ENCODE measurements at regions of chrX and their contacts with region 1.

Region 1: GRCh38 chrX:125132285-125132684 is 187.4 kb upstream of the TEX13C start:
- DNase-seq: no peak
- H3K4me3 Mint-ChIP-seq: no peak overlapping the region
- H3K27ac Mint-ChIP-seq: no peak overlapping the region
- H3K4me1 Mint-ChIP-seq: no peaks in the 10 kb centered on the region
- H3K27me3 Mint-ChIP-seq: no peaks in the 10 kb centered on the region

Region 2: GRCh38 chrX:124388562-124388961 is 743.7 kb before region 1 on chrX:
- CTCF ChIA-PET with region 1: interaction called, 6 read pairs
- POLR2A ChIA-PET with region 1: no interaction called
- intact Hi-C with region 1: loop called (anchors 5 kb)
- DNase-seq: peak; percentile 61
- H3K4me3 Mint-ChIP-seq: no peak overlapping the region
- H3K27ac Mint-ChIP-seq: no peak overlapping the region
- H3K4me1 Mint-ChIP-seq: peaks cover 15% of the 10 kb centered on the region
- H3K27me3 Mint-ChIP-seq: no peaks in the 10 kb centered on the region

Region 3: GRCh38 chrX:124963717-124964116 is 168.6 kb before region 1 on chrX:
- CTCF ChIA-PET with region 1: no interaction called
- POLR2A ChIA-PET with region 1: no interaction called
- intact Hi-C with region 1: no loop called
- DNase-seq: no peak
- H3K4me3 Mint-ChIP-seq: no peak within 1 kb of the TSS
- H3K27ac Mint-ChIP-seq: no peak within 1 kb of the TSS
- H3K4me1 Mint-ChIP-seq: no peaks in the 10 kb centered on the region
- H3K27me3 Mint-ChIP-seq: no peaks in the 10 kb centered on the region

Region 4: GRCh38 chrX:125203737-125204578 is 71.7 kb after region 1 on chrX:
- CTCF ChIA-PET with region 1: no interaction called
- POLR2A ChIA-PET with region 1: no interaction called
- intact Hi-C with region 1: no loop called
- DNase-seq: peak; percentile 18
- H3K4me3 Mint-ChIP-seq: peak overlapping the region; percentile 67
- H3K27ac Mint-ChIP-seq: no peak overlapping the region
- H3K4me1 Mint-ChIP-seq: peaks cover 17% of the 10 kb centered on the region
- H3K27me3 Mint-ChIP-seq: peaks cover 30% of the 10 kb centered on the region

Region 5: GRCh38 chrX:125436855-125437254 is 304.6 kb after region 1 on chrX:
- CTCF ChIA-PET with region 1: interaction called, 4 read pairs
- POLR2A ChIA-PET with region 1: no interaction called
- intact Hi-C with region 1: loop called (anchors 10 kb)
- DNase-seq: no peak
- H3K4me3 Mint-ChIP-seq: no peak overlapping the region
- H3K27ac Mint-ChIP-seq: no peak overlapping the region
- H3K4me1 Mint-ChIP-seq: no peaks in the 10 kb centered on the region
- H3K27me3 Mint-ChIP-seq: no peaks in the 10 kb centered on the region

Measured in activated CD4-positive, alpha-beta memory T cell treated with anti-CD3 and anti-CD28 coated beads for 36 hours (primary cell).